ENCODE measurements at regions of chr5 and their contacts with region 1.

Region 1: GRCh38 chr5:93675460-93676450 is 65.6 kb downstream of the POU5F2 start:
- DNase-seq: no peak
- ATAC-seq: peak; percentile 77
- H3K4me3 ChIP-seq: no peak overlapping the region
- H3K27ac ChIP-seq: no peak overlapping the region
- H3K4me1 ChIP-seq: peaks cover 4% of the 10 kb centered on the region; the same call in 1 of the 2 replicates
- H3K27me3 ChIP-seq: no peaks in the 10 kb centered on the region
- CTCF ChIP-seq: no peak
- EP300 ChIP-seq: no peak
- POLR2A ChIP-seq: no peak
- RAD21 ChIP-seq: no peak

Region 2: DNA sequence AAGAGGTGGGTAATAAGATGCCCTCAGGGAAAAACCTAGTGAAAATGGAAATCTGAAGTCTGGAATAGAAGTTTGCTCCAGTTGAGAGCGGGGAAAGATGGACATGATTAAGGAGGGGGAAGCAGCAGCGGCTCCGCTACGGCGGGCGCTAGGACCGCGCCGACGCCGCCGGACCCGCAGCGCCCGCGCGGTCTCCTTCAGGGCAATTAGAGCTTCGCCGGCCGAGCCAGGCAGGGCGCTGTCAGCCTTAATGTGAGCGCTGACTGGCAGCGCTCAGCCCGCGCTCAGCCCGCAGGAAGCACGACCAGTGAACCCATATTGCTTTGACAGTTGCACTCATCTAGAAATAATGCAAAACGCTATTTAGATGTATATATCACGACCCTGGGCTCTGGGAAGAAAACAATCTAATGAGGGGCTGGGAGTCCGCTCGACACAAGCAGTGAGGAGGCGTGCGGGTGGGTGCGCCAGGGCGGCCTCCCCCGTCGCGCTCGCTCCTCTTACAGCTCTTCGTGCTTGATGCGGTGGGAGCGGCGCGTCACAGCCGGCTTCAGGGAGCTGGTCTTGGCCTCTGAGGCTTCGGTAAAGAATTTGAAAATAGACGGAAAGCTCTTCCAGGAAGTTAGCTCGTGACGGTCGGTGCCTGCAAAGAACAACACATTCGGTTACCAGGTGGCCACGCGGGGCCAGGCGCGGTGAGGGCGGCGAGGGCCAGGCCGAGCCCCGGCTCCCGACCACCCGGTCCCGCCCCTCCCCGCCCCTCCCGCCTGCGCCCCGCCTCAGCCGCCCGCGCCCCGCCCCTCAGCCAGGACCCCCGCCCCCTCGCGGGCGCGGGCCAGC is 55.0 kb before region 1 on chr5:
- CTCF ChIA-PET with region 1: no interaction called
- POLR2A ChIA-PET with region 1: interaction called, 3 read pairs
- RAD21 ChIA-PET with region 1: interaction called, 4 read pairs
- SMC1A ChIA-PET with region 1: interaction called, 3 read pairs
- in situ Hi-C with region 1: no loop called
- intact Hi-C with region 1: loop called (anchors 2 kb)
- DNase-seq: no peak
- ATAC-seq: peak; percentile 99
- H3K4me3 ChIP-seq: peak overlapping the region; percentile 86
- H3K27ac ChIP-seq: no peak overlapping the region
- H3K4me1 ChIP-seq: peaks cover 3% of the 10 kb centered on the region; the same call in 1 of the 2 replicates
- H3K27me3 ChIP-seq: no peaks in the 10 kb centered on the region
- CTCF ChIP-seq: peak in 2 of 3 experiments; percentile 11 to 34; a peak in 2 of 6 replicates
- EP300 ChIP-seq: no peak
- POLR2A ChIP-seq: no peak
- RAD21 ChIP-seq: peak; percentile 17; the same call in 1 of the 2 replicates

Region 3: GRCh38 chr5:94360358-94361130 is 684.8 kb after region 1 on chr5:
- CTCF ChIA-PET with region 1: no interaction called
- POLR2A ChIA-PET with region 1: no interaction called
- RAD21 ChIA-PET with region 1: no interaction called
- SMC1A ChIA-PET with region 1: no interaction called
- in situ Hi-C with region 1: no loop called
- intact Hi-C with region 1: no loop called
- DNase-seq: no peak
- ATAC-seq: no peak
- H3K4me3 ChIP-seq: no peak overlapping the region
- H3K27ac ChIP-seq: no peak overlapping the region
- H3K4me1 ChIP-seq: no peaks in the 10 kb centered on the region
- H3K27me3 ChIP-seq: no peaks in the 10 kb centered on the region
- CTCF ChIP-seq: no peak
- EP300 ChIP-seq: no peak
- POLR2A ChIP-seq: no peak
- RAD21 ChIP-seq: no peak

Measured in GM12878 (cell line).